Mammary epithelial cell (primary cell): ENCODE measurements at regions of chr3 and their contacts with region 1.

Region 1: DNA sequence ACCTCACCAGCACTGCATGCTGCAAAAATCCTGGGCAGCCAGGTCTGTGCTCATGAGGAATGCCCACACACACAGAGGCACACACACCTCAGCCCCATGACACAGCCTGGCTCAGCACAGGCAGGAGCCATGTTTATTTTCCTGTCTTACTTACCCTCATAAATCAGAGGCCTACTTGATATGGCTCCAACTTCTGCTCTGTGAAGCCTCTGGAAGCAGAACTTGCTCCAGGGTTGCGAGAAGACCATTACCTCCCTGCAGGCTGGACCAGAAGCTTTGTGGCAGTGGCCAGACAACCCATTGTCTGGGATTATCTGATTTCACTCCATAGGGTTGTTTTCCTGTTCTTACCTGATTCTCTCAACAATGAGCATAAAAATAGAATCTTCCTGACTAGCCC is 43.8 kb upstream of the CMTM8 start:
- DNase-seq: no peak
- H3K4me3 ChIP-seq: no peak overlapping the region
- H3K27ac ChIP-seq: no peak overlapping the region
- H3K4me1 ChIP-seq: no peaks in the 10 kb centered on the region
- H3K27me3 ChIP-seq: peaks cover 5% of the 10 kb centered on the region
- CTCF ChIP-seq: no peak

Region 2: GRCh38 chr3:32082721-32083120 is 111.9 kb before region 1 on chr3:
- CTCF ChIA-PET with region 1: no interaction called
- dilution Hi-C with region 1: no loop called
- in situ Hi-C with region 1: no loop called
- intact Hi-C with region 1: no loop called
- DNase-seq: no peak
- H3K4me3 ChIP-seq: no peak overlapping the region
- H3K27ac ChIP-seq: no peak overlapping the region
- H3K4me1 ChIP-seq: no peaks in the 10 kb centered on the region
- H3K27me3 ChIP-seq: no peaks in the 10 kb centered on the region
- CTCF ChIP-seq: no peak

Region 3: GRCh38 chr3:32177702-32178198 is 16.9 kb before region 1 on chr3:
- CTCF ChIA-PET with region 1: no interaction called
- dilution Hi-C with region 1: no loop called
- in situ Hi-C with region 1: no loop called
- intact Hi-C with region 1: no loop called
- DNase-seq: peak; percentile 79
- H3K4me3 ChIP-seq: no peak overlapping the region
- H3K27ac ChIP-seq: no peak overlapping the region
- H3K4me1 ChIP-seq: peaks cover 7% of the 10 kb centered on the region
- H3K27me3 ChIP-seq: no peaks in the 10 kb centered on the region
- CTCF ChIP-seq: peak; percentile 99 to 100

Region 4: GRCh38 chr3:32334675-32335074 is 140.0 kb after region 1 on chr3:
- CTCF ChIA-PET with region 1: no interaction called
- dilution Hi-C with region 1: no loop called
- in situ Hi-C with region 1: loop called in 1 of 2 experiments (anchors 10 kb)
- intact Hi-C with region 1: no loop called
- DNase-seq: no peak
- H3K4me3 ChIP-seq: no peak overlapping the region
- H3K27ac ChIP-seq: no peak overlapping the region
- H3K4me1 ChIP-seq: no peaks in the 10 kb centered on the region
- H3K27me3 ChIP-seq: no peaks in the 10 kb centered on the region
- CTCF ChIP-seq: peak; percentile 26 to 64

Region 5: DNA sequence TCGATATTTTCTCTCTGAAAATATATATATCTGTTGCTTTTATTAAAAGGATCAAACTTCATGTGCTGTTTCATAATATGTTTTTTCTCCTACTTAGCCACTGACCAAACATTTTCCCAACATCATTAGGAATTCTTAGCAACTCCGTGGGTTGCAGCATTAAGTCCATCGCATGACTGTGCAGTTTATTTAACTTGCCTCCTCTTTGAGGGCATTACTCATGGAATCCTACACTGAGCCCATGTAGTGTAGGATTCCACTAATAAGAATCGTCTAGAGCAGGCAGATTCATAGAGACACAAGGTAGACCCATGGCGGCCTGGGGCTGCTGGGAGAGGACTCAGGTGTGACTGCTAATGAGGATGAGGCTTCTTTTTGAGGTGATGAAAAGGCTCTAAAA is 258.7 kb after region 1 on chr3:
- CTCF ChIA-PET with region 1: no interaction called
- dilution Hi-C with region 1: no loop called
- in situ Hi-C with region 1: no loop called
- intact Hi-C with region 1: no loop called
- DNase-seq: no peak
- H3K4me3 ChIP-seq: no peak overlapping the region
- H3K27ac ChIP-seq: no peak overlapping the region
- H3K4me1 ChIP-seq: no peaks in the 10 kb centered on the region
- H3K27me3 ChIP-seq: no peaks in the 10 kb centered on the region
- CTCF ChIP-seq: no peak

Region 6: DNA sequence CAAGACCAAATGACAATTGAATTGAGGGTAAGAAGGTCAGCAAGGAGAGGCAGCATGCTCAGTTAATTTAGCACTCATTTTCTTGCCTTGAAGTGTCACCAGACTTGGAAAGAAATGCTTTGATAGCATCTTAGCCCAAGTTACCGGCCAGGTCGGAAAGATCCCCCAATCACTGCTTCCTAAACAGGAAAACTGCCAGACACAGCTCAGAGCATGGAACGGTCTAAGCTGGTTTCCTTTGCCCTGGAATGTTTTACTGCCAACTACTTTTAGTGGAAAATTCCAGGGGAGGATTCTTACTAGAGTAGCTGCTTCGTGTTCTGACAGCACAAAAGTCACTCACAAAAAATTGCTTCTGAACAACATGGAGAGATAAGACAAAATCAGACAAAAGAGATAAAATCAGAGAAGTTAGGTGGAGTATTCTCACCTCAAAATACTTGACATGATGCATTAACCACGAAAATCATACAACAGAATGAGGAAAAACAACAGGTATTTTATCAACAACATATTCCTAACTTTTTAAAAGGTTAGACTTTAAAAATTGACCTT is 822.3 kb after region 1 on chr3:
- CTCF ChIA-PET with region 1: no interaction called
- dilution Hi-C with region 1: no loop called
- in situ Hi-C with region 1: no loop called
- intact Hi-C with region 1: no loop called
- DNase-seq: no peak
- H3K4me3 ChIP-seq: no peak overlapping the region
- H3K27ac ChIP-seq: no peak overlapping the region
- H3K4me1 ChIP-seq: no peaks in the 10 kb centered on the region
- H3K27me3 ChIP-seq: no peaks in the 10 kb centered on the region
- CTCF ChIP-seq: no peak